ENCODE measurements at regions of chr7 and their contacts with region 1.

Region 1: GRCh38 chr7:134710859-134711624 is 64.4 kb downstream of the BPGM start:
- DNase-seq: peak; percentile 33 to 84 (median 65)
- ATAC-seq: peak; percentile 93 to 94 (median 94)
- H3K4me3 ChIP-seq: no peak overlapping the region
- H3K4me3 Mint-ChIP-seq: peak overlapping the region in 2 of 3 donors; percentile 54 to 75
- H3K27ac ChIP-seq: peak overlapping the region; percentile 72
- H3K27ac Mint-ChIP-seq: peak overlapping the region; percentile 94
- H3K4me1 ChIP-seq: peaks cover 11 to 16% of the 10 kb centered on the region in 2 experiments
- H3K4me1 Mint-ChIP-seq: peaks cover 20 to 22% (median 21%) of the 10 kb centered on the region in 3 donors
- H3K27me3 ChIP-seq: peaks cover 0 to 2% of the 10 kb centered on the region in 2 experiments
- H3K27me3 Mint-ChIP-seq: peaks cover 0 to 1% of the 10 kb centered on the region in 2 donors

Region 2: GRCh38 chr7:134690016-134690415 is 21.0 kb before region 1 on chr7:
- CTCF ChIA-PET with region 1: interaction called in 1 of 2 experiments, 10 read pairs
- POLR2A ChIA-PET with region 1: no interaction called
- DNase-seq: no peak
- ATAC-seq: peak in 1 of 4 experiments; percentile 46
- H3K4me3 ChIP-seq: no peak overlapping the region
- H3K4me3 Mint-ChIP-seq: no peak overlapping the region
- H3K27ac ChIP-seq: no peak overlapping the region
- H3K27ac Mint-ChIP-seq: no peak overlapping the region
- H3K4me1 ChIP-seq: peaks cover 2 to 4% of the 10 kb centered on the region in 2 experiments
- H3K4me1 Mint-ChIP-seq: peaks cover 7 to 23% (median 13%) of the 10 kb centered on the region in 3 donors
- H3K27me3 ChIP-seq: peaks cover 0 to 4% of the 10 kb centered on the region in 2 experiments
- H3K27me3 Mint-ChIP-seq: peaks cover 0 to 4% of the 10 kb centered on the region in 2 donors

Region 3: DNA sequence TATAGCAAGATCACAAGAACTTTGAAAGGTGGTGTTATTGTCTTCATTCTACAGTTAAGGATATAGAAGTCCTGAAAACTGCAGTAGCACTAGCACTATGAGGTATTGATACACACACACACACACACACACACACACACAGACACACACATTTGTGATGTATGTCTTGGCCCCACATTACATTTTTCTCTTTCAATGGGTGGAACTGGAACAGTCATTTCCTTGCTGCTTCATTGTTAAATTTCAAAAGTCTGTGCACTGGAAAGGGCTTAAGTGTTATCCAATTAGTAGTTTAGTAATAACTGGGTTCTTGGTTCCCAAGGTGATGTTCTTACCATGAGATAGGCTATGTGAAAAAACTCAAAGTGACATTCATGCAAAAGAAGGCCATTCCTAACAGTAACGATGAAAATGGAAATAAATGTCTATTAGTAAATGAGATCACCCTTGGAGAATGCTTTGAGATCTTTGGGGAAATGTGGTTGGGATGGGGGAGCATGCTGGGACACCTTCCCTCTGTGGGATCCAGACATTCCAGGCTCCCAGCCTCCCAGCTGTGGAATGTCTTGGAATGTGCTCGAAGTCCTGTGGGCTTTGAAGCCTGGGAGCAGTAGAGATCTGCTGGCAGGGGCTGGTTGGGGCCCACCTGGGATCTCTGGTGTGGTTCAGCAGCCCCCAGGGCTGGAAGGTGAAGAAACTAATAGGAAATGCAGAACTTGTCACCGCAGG is 31.0 kb after region 1 on chr7:
- CTCF ChIA-PET with region 1: no interaction called
- POLR2A ChIA-PET with region 1: interaction called in 1 of 2 experiments, 16 read pairs
- DNase-seq: no peak
- ATAC-seq: no peak
- H3K4me3 ChIP-seq: no peak overlapping the region
- H3K4me3 Mint-ChIP-seq: no peak overlapping the region
- H3K27ac ChIP-seq: no peak overlapping the region
- H3K27ac Mint-ChIP-seq: no peak overlapping the region
- H3K4me1 ChIP-seq: no peaks in the 10 kb centered on the region
- H3K4me1 Mint-ChIP-seq: peaks cover 0 to 4% (median 0%) of the 10 kb centered on the region in 3 donors
- H3K27me3 ChIP-seq: peaks cover 0 to 6% of the 10 kb centered on the region in 2 experiments
- H3K27me3 Mint-ChIP-seq: peaks cover 0 to 3% of the 10 kb centered on the region in 2 donors